Mammary epithelial cell (primary cell): ENCODE measurements at regions of chr16 and their contacts with region 1.

Region 1: DNA sequence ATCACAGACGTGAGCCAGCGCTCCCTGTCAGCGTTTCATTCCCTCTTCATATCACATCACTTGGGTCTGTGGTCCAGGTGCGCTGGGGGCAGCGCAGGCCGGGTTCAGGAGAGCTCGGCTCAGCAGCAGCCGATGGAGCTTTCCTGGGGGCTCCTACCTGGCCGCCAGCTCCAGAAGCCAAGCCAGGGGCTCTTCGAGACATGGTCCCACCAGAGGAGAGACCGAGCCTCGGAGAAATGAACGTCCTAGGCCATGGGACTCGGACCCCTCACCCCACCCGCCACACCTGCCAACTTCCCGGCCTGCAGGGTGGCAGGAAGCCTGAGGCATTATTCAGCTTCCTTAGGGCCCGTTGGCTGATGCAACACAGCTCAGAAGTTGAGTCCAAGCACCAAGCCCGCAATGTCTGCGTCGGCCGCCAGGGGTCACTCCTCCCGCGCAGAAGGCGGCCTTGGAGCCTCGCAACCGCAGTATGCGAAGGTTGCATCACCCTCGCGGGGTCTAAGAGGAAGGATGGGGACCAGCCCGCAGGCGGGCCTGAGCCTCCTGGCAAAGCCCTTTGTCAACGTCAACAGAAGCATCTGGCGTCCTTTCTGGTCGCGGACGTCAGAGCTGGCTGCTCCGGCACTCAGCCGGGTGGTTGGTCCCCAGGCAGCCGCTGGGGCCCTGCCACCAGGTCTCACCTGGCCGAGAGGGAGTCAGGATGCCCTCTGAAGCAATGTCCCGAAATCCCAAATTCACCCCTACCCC is 13.2 kb upstream of the KLHDC4 start:
- DNase-seq: peak; percentile 83
- H3K4me3 ChIP-seq: no peak overlapping the region
- H3K27ac ChIP-seq: peak overlapping the region; percentile 76
- H3K4me1 ChIP-seq: peaks cover 43% of the 10 kb centered on the region
- H3K27me3 ChIP-seq: no peaks in the 10 kb centered on the region
- CTCF ChIP-seq: peak; percentile 86 to 94

Region 2: DNA sequence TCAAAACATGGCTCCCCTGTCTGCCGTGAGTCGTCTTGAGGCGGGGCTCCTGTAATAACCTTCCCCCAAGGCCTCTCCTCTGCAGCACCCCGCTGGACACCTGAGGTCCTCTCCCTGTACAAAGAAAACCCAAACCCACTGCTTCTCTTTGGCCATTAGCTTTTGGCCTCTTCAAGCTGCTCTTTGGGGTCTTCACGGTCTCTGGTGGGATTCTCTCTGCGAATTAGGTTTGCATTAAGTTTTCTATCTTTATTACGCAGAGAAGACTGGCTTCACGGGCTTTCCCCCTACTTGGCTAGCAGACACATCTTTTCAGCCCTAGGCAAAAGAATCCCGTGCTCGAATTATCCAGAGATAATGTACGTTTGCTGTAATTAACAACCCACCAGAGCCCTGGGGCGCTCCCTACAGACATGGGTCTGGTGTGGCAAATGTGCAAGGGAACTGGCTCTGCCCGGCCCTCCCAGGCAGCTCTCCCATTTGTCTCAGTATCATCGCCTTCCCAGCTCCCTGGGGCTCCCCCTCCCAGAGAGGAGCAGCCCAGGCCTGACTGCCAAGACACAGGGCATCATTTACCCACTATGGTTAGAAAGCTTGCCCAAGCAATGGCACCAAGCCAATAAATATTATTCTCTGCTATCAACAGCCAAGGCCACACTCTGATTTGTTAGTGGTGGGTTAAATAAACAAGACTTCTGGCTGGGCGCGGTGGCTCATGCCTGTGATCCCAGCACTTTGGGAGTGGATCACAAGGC is 11.4 kb after region 1 on chr16:
- CTCF ChIA-PET with region 1: interaction called, 6 read pairs
- dilution Hi-C with region 1: no loop called
- in situ Hi-C with region 1: no loop called
- intact Hi-C with region 1: loop called (anchors 1 kb)
- DNase-seq: peak; percentile 89
- H3K4me3 ChIP-seq: no peak overlapping the region
- H3K27ac ChIP-seq: peak overlapping the region; percentile 96
- H3K4me1 ChIP-seq: peaks cover 34% of the 10 kb centered on the region
- H3K27me3 ChIP-seq: no peaks in the 10 kb centered on the region
- CTCF ChIP-seq: no peak

Region 3: GRCh38 chr16:87823181-87823929 is 44.4 kb after region 1 on chr16:
- CTCF ChIA-PET with region 1: no interaction called
- dilution Hi-C with region 1: no loop called
- in situ Hi-C with region 1: no loop called
- intact Hi-C with region 1: loop called (anchors 1 kb)
- DNase-seq: peak; percentile 79
- H3K4me3 ChIP-seq: no peak overlapping the region
- H3K27ac ChIP-seq: no peak overlapping the region
- H3K4me1 ChIP-seq: peaks cover 29% of the 10 kb centered on the region
- H3K27me3 ChIP-seq: no peaks in the 10 kb centered on the region
- CTCF ChIP-seq: no peak

Region 4: GRCh38 chr16:87853411-87854052 is 74.5 kb after region 1 on chr16:
- CTCF ChIA-PET with region 1: no interaction called
- dilution Hi-C with region 1: no loop called
- in situ Hi-C with region 1: loop called in 1 of 2 experiments (anchors 5 kb)
- intact Hi-C with region 1: loop called (anchors 1 kb)
- DNase-seq: peak; percentile 94
- H3K4me3 ChIP-seq: peak overlapping the region in 2 of 3 experiments; percentile 17 to 39
- H3K27ac ChIP-seq: peak overlapping the region; percentile 86
- H3K4me1 ChIP-seq: peaks cover 77% of the 10 kb centered on the region
- H3K27me3 ChIP-seq: no peaks in the 10 kb centered on the region
- CTCF ChIP-seq: no peak

Region 5: DNA sequence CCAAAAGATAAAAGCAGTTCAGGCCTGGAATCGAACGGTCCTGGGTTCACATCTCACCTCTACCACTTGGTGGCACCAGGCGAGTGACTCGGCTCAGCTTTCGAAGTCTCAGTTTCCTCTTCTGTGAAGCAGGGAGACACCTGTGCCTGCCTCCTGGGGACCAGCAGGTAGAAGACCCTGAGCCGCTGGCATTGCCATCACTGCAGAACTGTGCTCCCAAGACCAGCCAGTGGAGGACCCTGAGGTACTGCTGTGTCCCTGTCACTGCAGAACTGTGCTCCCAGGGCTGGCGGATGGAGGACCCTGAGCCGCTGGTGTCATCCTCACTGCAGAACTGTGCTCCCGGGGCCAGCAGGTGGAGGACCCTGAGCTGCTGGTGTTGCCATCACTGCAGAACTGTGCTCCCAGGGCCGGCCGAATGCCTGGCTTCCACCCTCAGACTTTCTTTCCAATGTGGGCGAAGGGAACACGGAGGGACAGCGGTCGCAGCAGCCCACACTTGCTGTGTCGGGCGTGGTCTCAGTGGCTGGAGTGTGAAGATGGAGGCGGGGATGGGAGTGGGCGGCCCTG is 99.0 kb after region 1 on chr16:
- CTCF ChIA-PET with region 1: interaction called, 4 read pairs
- dilution Hi-C with region 1: loop called (anchors 5 kb)
- in situ Hi-C with region 1: no loop called
- intact Hi-C with region 1: no loop called
- DNase-seq: no peak
- H3K4me3 ChIP-seq: no peak overlapping the region
- H3K27ac ChIP-seq: no peak overlapping the region
- H3K4me1 ChIP-seq: no peaks in the 10 kb centered on the region
- H3K27me3 ChIP-seq: peaks cover 15% of the 10 kb centered on the region
- CTCF ChIP-seq: peak in 1 of 2 donors; percentile 6